ENCODE measurements at regions of chr6 and their contacts with region 1.

Region 1: DNA sequence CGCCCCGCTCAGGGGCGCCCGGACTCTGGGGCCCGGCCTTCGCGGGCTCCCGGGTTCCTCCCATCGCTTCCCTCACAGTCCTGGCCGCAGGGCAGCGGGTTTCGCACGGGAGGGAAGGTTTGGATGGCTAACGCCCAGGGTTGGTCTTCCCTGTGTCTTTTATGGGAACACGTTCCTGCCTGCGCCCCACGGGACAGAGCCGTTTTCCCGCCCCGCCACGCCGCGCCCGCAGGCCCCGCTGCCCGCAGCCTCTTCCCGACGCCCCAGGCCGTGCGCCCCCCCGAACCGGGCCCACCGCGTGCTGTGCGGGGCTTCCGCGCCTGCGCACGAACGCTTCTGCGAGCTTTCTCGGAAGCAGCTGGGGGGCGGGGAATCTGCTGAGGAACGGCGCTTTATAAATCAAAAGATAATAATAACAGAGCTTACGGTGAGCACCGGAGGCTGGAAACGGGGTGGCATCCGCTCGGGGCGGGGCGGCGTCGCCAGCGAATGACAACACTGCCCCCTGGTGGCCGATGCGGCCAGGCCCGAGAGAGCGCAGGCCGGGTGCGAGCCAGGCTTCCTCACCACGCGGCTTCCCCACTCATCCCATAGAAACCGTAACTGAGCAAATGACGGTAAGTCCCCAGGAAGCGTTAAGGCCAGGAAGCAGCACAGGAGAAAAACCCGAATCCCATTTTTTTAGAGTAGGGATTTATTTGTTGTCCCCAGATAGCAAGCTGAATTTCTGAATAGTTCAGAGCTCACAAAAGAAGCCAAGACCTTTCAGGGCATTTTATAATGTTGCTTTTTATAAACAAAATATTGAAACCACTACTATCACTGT is 116.4 kb downstream of the MYLK4 start:
- DNase-seq: peak; percentile 92
- H3K4me3 ChIP-seq: peak overlapping the region; percentile 24 to 57 (median 49)
- H3K27ac ChIP-seq: peak overlapping the region; percentile 58 to 84 (median 70)
- H3K4me1 ChIP-seq: peaks cover 0 to 33% (median 26%) of the 10 kb centered on the region in 4 donors
- H3K27me3 ChIP-seq: no peaks in the 10 kb centered on the region
- CTCF ChIP-seq: peak; percentile 85 to 99 (median 90)
- EP300 ChIP-seq: peak in 1 of 4 donors; percentile 33
- POLR2A ChIP-seq: no peak

Region 2: GRCh38 chr6:1596088-1596852 is 1038.1 kb before region 1 on chr6:
- intact Hi-C with region 1: loop called (anchors 2 kb)
- DNase-seq: peak; percentile 76
- H3K4me3 ChIP-seq: no peak overlapping the region
- H3K27ac ChIP-seq: no peak overlapping the region
- H3K4me1 ChIP-seq: peaks cover 0 to 7% (median 4%) of the 10 kb centered on the region in 4 donors
- H3K27me3 ChIP-seq: peaks cover 10 to 62% (median 46%) of the 10 kb centered on the region in 3 donors
- CTCF ChIP-seq: peak; percentile 80 to 96 (median 86)
- EP300 ChIP-seq: no peak
- POLR2A ChIP-seq: no peak

Region 3: DNA sequence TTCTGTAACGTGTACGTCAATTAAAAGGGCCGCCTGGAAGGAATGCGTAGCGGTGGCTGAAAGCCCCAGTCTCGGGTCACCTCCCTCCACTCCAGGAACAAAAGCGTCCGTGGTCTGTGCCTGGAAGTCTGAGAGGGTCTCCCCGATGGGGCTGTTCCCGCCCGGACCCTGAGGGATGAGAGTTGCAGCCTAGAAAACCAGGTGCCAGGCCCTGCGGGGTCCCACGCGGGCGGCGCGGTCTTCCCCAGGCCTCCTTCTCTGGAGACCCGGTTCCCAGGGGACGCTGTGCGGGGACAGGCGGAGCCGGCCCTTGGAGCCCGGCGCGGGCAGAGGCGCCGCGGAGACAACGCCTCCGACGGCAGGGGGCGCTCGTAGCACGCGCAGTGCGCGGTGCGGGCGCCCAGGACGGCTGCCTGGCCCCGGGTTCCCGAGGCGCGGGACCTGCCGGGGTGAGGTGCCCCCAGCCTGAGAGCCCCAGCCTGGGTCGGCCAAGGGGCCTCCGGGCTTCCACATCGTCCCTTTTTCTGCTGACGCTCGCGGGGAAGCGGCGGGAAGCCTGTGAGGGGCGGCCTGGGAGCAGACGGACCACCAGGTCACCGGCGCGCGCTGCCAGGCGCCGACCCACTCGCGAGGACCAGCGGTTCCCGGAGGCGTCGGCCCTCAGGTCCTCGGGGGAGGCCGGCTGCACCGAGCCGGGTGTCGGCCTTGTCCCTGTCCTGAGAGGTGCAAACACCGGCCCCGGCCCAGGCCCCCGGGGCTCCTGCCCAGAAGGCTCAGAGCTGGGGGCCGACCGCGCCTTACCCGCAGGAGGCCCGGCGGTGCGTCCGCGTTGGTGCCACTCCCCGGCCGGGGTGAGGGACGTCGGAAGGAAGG is 1030.0 kb before region 1 on chr6:
- intact Hi-C with region 1: loop called (anchors 1 kb)
- DNase-seq: peak; percentile 66
- H3K4me3 ChIP-seq: peak overlapping the region in 3 of 4 donors; percentile 36 to 45 (median 44)
- H3K27ac ChIP-seq: no peak overlapping the region
- H3K4me1 ChIP-seq: peaks cover 0 to 49% (median 30%) of the 10 kb centered on the region in 4 donors
- H3K27me3 ChIP-seq: peaks cover 59 to 91% (median 87%) of the 10 kb centered on the region in 3 donors
- CTCF ChIP-seq: peak; percentile 28 to 98 (median 47)
- EP300 ChIP-seq: no peak
- POLR2A ChIP-seq: no peak

Region 4: DNA sequence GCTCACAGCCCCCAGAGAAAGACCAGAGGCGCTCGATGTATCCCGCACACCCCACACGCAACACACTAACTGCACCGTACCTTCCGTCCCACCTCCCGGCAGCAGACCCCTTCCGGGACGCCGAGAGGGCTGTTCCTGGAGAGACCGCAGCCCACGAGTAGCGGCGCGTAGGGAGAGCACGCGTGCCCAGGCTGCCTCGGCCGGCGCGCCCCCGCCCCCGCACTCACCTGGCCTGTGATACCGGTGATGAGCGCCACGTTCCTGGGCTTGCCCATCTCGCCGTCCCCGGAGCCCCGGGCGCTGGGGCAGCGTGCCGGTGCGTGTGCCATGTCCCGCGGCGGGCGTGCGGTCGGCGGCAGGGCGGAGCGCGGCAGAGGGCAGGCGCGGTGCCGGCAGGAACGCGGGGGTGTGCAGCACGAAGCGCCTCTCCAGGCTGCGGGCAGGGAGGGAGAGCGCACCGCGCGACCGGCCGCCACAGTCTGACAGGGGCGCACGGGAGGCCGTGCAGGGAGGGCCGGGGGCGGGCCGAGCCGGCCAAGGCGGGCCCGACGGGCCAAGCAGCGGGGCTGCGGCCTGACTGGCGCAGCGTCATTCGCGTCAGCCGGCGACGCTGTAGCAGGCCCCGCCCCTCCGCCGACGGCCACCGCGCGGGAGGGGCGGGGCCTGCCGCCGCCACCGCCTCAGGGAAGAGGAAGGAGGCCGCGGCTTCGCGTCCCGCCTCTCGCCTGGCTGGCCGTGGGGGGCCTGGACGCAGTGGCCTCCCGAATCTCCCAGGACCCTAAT is 389.1 kb before region 1 on chr6 and contains the start of gene GMDS:
- intact Hi-C with region 1: loop called (anchors 5 kb)
- DNase-seq: peak; percentile 93
- H3K4me3 ChIP-seq: peak within 1 kb of the TSS; percentile 66 to 93 (median 88)
- H3K27ac ChIP-seq: peak within 1 kb of the TSS; percentile 75 to 87 (median 81)
- H3K4me1 ChIP-seq: peaks cover 0 to 22% (median 11%) of the 10 kb centered on the region in 4 donors
- H3K27me3 ChIP-seq: no peaks in the 10 kb centered on the region
- CTCF ChIP-seq: no peak
- EP300 ChIP-seq: no peak
- POLR2A ChIP-seq: peak in 1 of 2 donors; percentile 56
- total RNA-seq, gene GMDS: 3.1 to 9.4 (median 3.8) TPM

Region 5: GRCh38 chr6:2353412-2354137 is 280.8 kb before region 1 on chr6:
- intact Hi-C with region 1: loop called (anchors 5 kb)
- DNase-seq: peak; percentile 71
- H3K4me3 ChIP-seq: no peak overlapping the region
- H3K27ac ChIP-seq: peak overlapping the region in 1 of 4 donors; percentile 18
- H3K4me1 ChIP-seq: peaks cover 0 to 14% (median 5%) of the 10 kb centered on the region in 4 donors
- H3K27me3 ChIP-seq: no peaks in the 10 kb centered on the region
- CTCF ChIP-seq: peak; percentile 58 to 78 (median 63)
- EP300 ChIP-seq: no peak
- POLR2A ChIP-seq: no peak

Region 6: GRCh38 chr6:2448820-2449571 is 185.4 kb before region 1 on chr6:
- intact Hi-C with region 1: loop called (anchors 2 kb)
- DNase-seq: no peak
- H3K4me3 ChIP-seq: peak overlapping the region in 2 of 4 donors; percentile 18 to 27
- H3K27ac ChIP-seq: no peak overlapping the region
- H3K4me1 ChIP-seq: peaks cover 0 to 6% (median 5%) of the 10 kb centered on the region in 4 donors
- H3K27me3 ChIP-seq: no peaks in the 10 kb centered on the region
- CTCF ChIP-seq: peak in 3 of 4 experiments; percentile 59 to 65 (median 61)
- EP300 ChIP-seq: no peak
- POLR2A ChIP-seq: no peak

Region 7: GRCh38 chr6:2749969-2750600 is 115.7 kb after region 1 on chr6:
- intact Hi-C with region 1: loop called (anchors 10 kb)
- DNase-seq: no peak
- H3K4me3 ChIP-seq: no peak overlapping the region
- H3K27ac ChIP-seq: no peak overlapping the region
- H3K4me1 ChIP-seq: peaks cover 0 to 4% (median 0%) of the 10 kb centered on the region in 4 donors
- H3K27me3 ChIP-seq: no peaks in the 10 kb centered on the region
- CTCF ChIP-seq: peak; percentile 63 to 80 (median 65)
- EP300 ChIP-seq: no peak
- POLR2A ChIP-seq: no peak